ENCODE measurements at regions of chr4 and their contacts with region 1.

Region 1: DNA sequence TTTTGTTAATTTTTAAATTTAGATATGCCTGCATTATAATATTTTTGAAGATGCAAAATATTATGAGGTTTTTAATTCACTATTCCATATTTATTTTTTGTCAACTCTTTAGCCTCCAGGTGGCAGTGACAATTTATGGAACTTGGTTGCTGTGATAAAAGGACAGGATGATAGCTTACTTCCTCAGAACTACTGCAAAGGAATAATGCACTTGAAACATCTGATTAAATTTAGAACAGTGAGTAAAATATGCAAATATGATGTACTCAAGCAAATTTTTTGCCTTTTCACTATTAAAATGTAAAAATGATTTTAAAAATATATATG is 45.1 kb downstream of the SPATA4 start:
- DNase-seq: peak; percentile 5
- ATAC-seq: no peak
- H3K4me3 ChIP-seq: no peak overlapping the region
- H3K27ac ChIP-seq: no peak overlapping the region
- H3K4me1 ChIP-seq: no peaks in the 10 kb centered on the region
- H3K27me3 ChIP-seq: no peaks in the 10 kb centered on the region
- CTCF ChIP-seq: no peak
- EP300 ChIP-seq: no peak
- POLR2A ChIP-seq: no peak
- RAD21 ChIP-seq: no peak

Region 2: DNA sequence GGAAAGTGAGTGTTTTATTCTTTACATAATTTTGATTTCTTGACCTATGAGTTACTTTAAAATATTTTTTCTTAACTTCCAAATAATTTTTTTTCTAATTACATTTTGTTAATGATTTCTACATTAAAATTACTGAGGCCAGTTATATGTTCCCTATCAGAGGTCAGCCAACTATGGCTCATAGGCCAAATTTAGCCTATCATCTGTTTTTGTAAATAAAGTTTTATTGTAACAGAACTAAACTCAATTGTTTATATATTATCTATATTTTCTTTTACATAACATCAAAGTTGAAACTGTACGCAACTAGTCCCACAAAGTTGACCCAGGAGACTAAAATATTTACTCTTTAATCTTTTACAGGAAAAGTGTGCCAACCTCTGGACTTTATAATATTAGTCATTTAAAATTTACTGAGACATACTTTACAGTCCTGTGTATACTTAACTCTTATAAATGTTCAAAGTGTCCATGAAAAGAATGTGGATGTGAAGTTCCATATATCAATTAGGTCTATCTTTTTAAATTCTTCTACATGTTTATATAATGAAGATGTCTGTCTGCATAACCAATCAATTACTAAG is 92.5 kb after region 1 on chr4:
- CTCF ChIA-PET with region 1: no interaction called
- POLR2A ChIA-PET with region 1: no interaction called
- in situ Hi-C with region 1: no loop called
- intact Hi-C with region 1: no loop called
- DNase-seq: no peak
- ATAC-seq: no peak
- H3K4me3 ChIP-seq: no peak overlapping the region
- H3K27ac ChIP-seq: no peak overlapping the region
- H3K4me1 ChIP-seq: no peaks in the 10 kb centered on the region
- H3K27me3 ChIP-seq: no peaks in the 10 kb centered on the region
- CTCF ChIP-seq: no peak
- EP300 ChIP-seq: no peak
- POLR2A ChIP-seq: no peak
- RAD21 ChIP-seq: no peak

Region 3: GRCh38 chr4:176277162-176277904 is 127.0 kb after region 1 on chr4:
- CTCF ChIA-PET with region 1: no interaction called
- POLR2A ChIA-PET with region 1: no interaction called
- in situ Hi-C with region 1: no loop called
- intact Hi-C with region 1: loop called (anchors 1 kb)
- DNase-seq: peak; percentile 39
- ATAC-seq: peak; percentile 100
- H3K4me3 ChIP-seq: peak overlapping the region in 2 of 3 experiments; percentile 18 to 34; a peak in 2 of 6 replicates
- H3K27ac ChIP-seq: no peak overlapping the region
- H3K4me1 ChIP-seq: peaks cover 8% of the 10 kb centered on the region
- H3K27me3 ChIP-seq: peaks cover 0 to 4% of the 10 kb centered on the region in 2 experiments; a peak in 1 of 5 replicates
- CTCF ChIP-seq: peak; percentile 52
- EP300 ChIP-seq: no peak
- POLR2A ChIP-seq: no peak
- RAD21 ChIP-seq: no peak

Region 4: DNA sequence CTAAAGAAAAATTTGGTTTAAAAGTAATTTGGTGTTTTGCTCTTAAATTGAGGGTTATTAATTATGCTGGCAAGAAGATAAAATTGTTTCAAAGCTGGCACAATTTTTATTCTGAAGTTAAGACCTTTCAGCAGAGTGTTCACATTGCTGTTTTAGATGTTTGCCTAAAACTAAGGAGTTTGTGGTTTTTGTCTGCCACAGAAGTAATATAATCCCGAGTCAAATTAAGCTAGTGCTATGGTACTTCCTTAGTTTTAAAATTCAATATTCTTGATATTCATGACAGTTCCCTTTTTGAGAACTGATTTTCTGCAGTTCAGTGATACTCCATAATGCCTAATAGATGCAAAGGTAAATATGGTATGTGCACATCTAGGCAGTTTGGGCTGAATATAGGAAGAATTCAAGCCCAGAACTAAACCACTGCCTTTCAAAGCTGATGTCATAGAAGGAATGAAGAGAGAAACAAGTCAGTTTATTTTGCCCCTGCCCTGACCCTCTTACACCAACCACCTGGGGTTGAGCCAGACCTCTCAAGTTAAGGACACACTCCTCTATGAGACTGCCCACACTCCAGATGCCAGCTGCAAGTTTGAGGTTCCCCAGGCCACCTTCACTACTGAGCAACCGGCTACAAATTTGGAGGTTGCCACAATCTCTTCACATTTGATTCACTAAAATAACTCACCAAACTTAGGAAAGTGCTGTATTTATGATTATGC is 674.5 kb after region 1 on chr4:
- CTCF ChIA-PET with region 1: no interaction called
- POLR2A ChIA-PET with region 1: no interaction called
- in situ Hi-C with region 1: no loop called
- intact Hi-C with region 1: no loop called
- DNase-seq: no peak
- ATAC-seq: no peak
- H3K4me3 ChIP-seq: no peak overlapping the region
- H3K27ac ChIP-seq: no peak overlapping the region
- H3K4me1 ChIP-seq: no peaks in the 10 kb centered on the region
- H3K27me3 ChIP-seq: peaks cover 0 to 2% of the 10 kb centered on the region in 2 experiments; a peak in 1 of 5 replicates
- CTCF ChIP-seq: no peak
- EP300 ChIP-seq: no peak
- POLR2A ChIP-seq: no peak
- RAD21 ChIP-seq: no peak